ENCODE measurements at regions of chr2 and their contacts with region 1.

Region 1: DNA sequence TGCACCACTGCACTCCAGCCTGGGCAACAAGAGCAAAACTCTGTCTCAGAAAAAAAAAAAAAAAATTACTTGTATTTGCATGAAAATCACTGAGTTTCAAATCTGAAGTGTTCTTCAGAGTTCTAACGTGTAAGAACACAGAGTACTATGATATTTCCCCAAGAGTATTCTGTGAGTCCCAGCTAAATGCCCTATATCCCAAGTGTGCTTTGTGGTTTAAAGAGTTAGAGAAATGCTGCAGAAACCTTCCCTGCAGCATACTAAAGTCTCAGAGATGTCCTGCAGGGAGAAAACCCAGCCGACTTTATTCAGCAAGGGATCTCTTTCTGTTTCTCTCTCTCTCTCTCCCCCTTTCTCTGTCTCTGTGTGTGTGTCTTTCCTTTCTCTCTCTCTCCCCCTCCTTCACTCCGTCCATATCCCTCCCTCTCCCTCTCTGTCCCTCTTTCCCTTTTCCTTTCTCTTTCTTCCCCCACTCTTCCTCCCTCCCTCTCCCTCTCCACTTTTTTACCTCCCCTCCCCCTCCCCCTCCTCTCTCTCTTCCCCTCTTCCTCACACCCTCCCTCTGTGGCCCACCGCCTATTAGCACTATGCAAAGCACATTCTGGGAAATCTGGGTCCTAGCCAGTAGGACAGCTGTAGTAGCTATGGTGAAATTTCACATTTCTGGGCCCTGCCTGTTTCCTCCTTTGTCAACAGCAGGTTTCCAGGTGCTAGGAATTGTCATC is 54.2 kb downstream of the ACTR2 start:
- DNase-seq: no peak
- ATAC-seq: no peak
- H3K4me3 ChIP-seq: no peak overlapping the region
- H3K27ac ChIP-seq: no peak overlapping the region
- H3K4me1 ChIP-seq: no peaks in the 10 kb centered on the region; the same call in 1 of the 2 replicates
- H3K27me3 ChIP-seq: no peaks in the 10 kb centered on the region
- CTCF ChIP-seq: no peak

Region 2: GRCh38 chr2:65204461-65205210 is 77.2 kb before region 1 on chr2:
- CTCF ChIA-PET with region 1: interaction called, 15 read pairs
- POLR2A ChIA-PET with region 1: no interaction called
- intact Hi-C with region 1: no loop called
- DNase-seq: no peak
- ATAC-seq: no peak
- H3K4me3 ChIP-seq: no peak overlapping the region
- H3K27ac ChIP-seq: no peak overlapping the region
- H3K4me1 ChIP-seq: no peaks in the 10 kb centered on the region
- H3K27me3 ChIP-seq: no peaks in the 10 kb centered on the region
- CTCF ChIP-seq: no peak

Region 3: GRCh38 chr2:65294136-65294535 is 12.3 kb after region 1 on chr2:
- CTCF ChIA-PET with region 1: interaction called, 14 read pairs
- POLR2A ChIA-PET with region 1: no interaction called
- intact Hi-C with region 1: no loop called
- DNase-seq: no peak
- ATAC-seq: no peak
- H3K4me3 ChIP-seq: no peak overlapping the region
- H3K27ac ChIP-seq: no peak overlapping the region
- H3K4me1 ChIP-seq: peaks cover 3% of the 10 kb centered on the region; the same call in 1 of the 2 replicates
- H3K27me3 ChIP-seq: no peaks in the 10 kb centered on the region
- CTCF ChIP-seq: no peak

Measured in PC-3 (cell line).